Naive thymus-derived CD4-positive, alpha-beta T cell (primary cell): ENCODE measurements at regions of chrX and their contacts with region 1.

Region 1: GRCh38 chrX:43958529-43958928 is 14.7 kb downstream of the NDP start:
- DNase-seq: peak in 7 of 9 donors; percentile 18 to 58 (median 36)
- ATAC-seq: peak; percentile 74
- H3K4me3 ChIP-seq: no peak overlapping the region
- H3K4me3 Mint-ChIP-seq: peak overlapping the region in 1 of 10 donors; percentile 44
- H3K27ac ChIP-seq: no peak overlapping the region
- H3K27ac Mint-ChIP-seq: peak overlapping the region in 3 of 9 donors; percentile 6 to 29 (median 24)
- H3K4me1 ChIP-seq: no peaks in the 10 kb centered on the region
- H3K4me1 Mint-ChIP-seq: peaks cover 0 to 6% (median 5%) of the 10 kb centered on the region in 7 donors
- H3K27me3 ChIP-seq: no peaks in the 10 kb centered on the region
- H3K27me3 Mint-ChIP-seq: peaks cover 0 to 5% (median 0%) of the 10 kb centered on the region in 5 donors

Region 2: GRCh38 chrX:43836435-43837184 is 121.9 kb before region 1 on chrX:
- CTCF ChIA-PET with region 1: no interaction called
- POLR2A ChIA-PET with region 1: no interaction called
- intact Hi-C with region 1: loop called in 1 of 2 experiments (anchors 10 kb)
- DNase-seq: peak in 5 of 9 donors; percentile 8 to 39 (median 20)
- ATAC-seq: no peak
- H3K4me3 ChIP-seq: no peak overlapping the region
- H3K4me3 Mint-ChIP-seq: no peak overlapping the region
- H3K27ac ChIP-seq: no peak overlapping the region
- H3K27ac Mint-ChIP-seq: no peak overlapping the region
- H3K4me1 ChIP-seq: no peaks in the 10 kb centered on the region
- H3K4me1 Mint-ChIP-seq: no peaks in the 10 kb centered on the region
- H3K27me3 ChIP-seq: no peaks in the 10 kb centered on the region
- H3K27me3 Mint-ChIP-seq: peaks cover 0 to 6% (median 0%) of the 10 kb centered on the region in 5 donors

Region 3: GRCh38 chrX:44305921-44306735 is 347.6 kb after region 1 on chrX:
- CTCF ChIA-PET with region 1: interaction called, 5 read pairs
- POLR2A ChIA-PET with region 1: no interaction called
- intact Hi-C with region 1: loop called in 1 of 2 experiments (anchors 1 kb)
- DNase-seq: no peak
- ATAC-seq: no peak
- H3K4me3 ChIP-seq: no peak overlapping the region
- H3K4me3 Mint-ChIP-seq: no peak overlapping the region
- H3K27ac ChIP-seq: no peak overlapping the region
- H3K27ac Mint-ChIP-seq: peak overlapping the region in 1 of 9 donors; percentile 62
- H3K4me1 ChIP-seq: no peaks in the 10 kb centered on the region
- H3K4me1 Mint-ChIP-seq: peaks cover 0 to 5% (median 0%) of the 10 kb centered on the region in 7 donors
- H3K27me3 ChIP-seq: no peaks in the 10 kb centered on the region
- H3K27me3 Mint-ChIP-seq: no peaks in the 10 kb centered on the region

Region 4: DNA sequence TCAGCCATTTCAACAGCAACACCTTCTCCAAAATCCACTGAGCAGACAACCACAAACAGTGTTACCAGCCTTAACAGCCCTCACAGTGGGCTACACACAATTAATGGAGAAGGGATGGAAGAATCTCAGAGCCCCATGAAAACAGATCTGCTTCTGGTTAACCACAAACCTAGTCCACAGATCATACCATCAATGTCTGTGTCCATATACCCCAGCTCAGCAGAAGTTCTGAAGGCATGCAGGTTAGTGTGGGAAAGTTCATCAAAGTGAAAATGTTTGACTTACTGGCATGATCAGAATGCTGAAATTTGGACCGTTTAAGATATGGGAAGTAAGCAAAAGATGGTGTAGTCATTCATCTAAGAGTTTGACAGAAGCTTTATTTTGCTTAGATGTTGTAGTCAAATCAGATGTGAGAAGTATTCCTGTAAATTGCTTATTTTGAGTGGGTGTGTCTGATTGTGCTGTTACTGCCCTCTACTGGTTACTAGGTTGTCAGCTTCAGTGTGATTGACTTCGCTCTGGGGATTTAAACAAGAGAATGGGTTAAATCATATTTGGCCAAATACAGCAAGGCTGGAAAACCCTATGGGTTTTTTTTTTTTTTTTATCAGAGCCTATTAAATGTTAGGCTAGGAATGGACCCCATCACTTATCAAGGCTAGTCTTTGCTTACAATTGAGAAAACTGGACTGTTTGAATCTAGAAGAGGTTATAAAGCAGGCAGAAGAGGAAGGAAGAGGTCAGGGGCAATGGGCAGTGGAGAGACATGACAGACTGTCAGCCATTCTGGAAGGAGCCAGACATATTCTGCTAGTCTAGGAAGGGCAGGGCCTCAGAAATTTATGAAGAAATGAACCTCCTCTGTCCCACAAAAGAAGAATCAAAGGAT is 1111.8 kb after region 1 on chrX:
- CTCF ChIA-PET with region 1: no interaction called
- POLR2A ChIA-PET with region 1: no interaction called
- intact Hi-C with region 1: loop called (anchors 2 to 10 kb)
- DNase-seq: peak in 7 of 9 donors; percentile 9 to 59 (median 47)
- ATAC-seq: peak; percentile 74
- H3K4me3 ChIP-seq: no peak overlapping the region
- H3K4me3 Mint-ChIP-seq: peak overlapping the region in 7 of 10 donors; percentile 7 to 50 (median 17)
- H3K27ac ChIP-seq: peak overlapping the region; percentile 36
- H3K27ac Mint-ChIP-seq: peak overlapping the region; percentile 61 to 88 (median 74)
- H3K4me1 ChIP-seq: peaks cover 0 to 4% of the 10 kb centered on the region in 2 donors
- H3K4me1 Mint-ChIP-seq: peaks cover 30 to 87% (median 67%) of the 10 kb centered on the region in 7 donors
- H3K27me3 ChIP-seq: no peaks in the 10 kb centered on the region
- H3K27me3 Mint-ChIP-seq: no peaks in the 10 kb centered on the region

Region 5: GRCh38 chrX:45749375-45749774 is 1790.8 kb after region 1 on chrX:
- CTCF ChIA-PET with region 1: no interaction called
- POLR2A ChIA-PET with region 1: no interaction called
- intact Hi-C with region 1: loop called in 1 of 2 experiments (anchors 5 kb)
- DNase-seq: peak in 1 of 9 donors; percentile 33
- ATAC-seq: peak; percentile 59
- H3K4me3 ChIP-seq: no peak overlapping the region
- H3K4me3 Mint-ChIP-seq: peak overlapping the region in 1 of 10 donors; percentile 26
- H3K27ac ChIP-seq: no peak overlapping the region
- H3K27ac Mint-ChIP-seq: peak overlapping the region in 5 of 9 donors; percentile 19 to 48 (median 28)
- H3K4me1 ChIP-seq: peaks cover 17 to 32% of the 10 kb centered on the region in 2 donors
- H3K4me1 Mint-ChIP-seq: peaks cover 0 to 29% (median 8%) of the 10 kb centered on the region in 7 donors
- H3K27me3 ChIP-seq: no peaks in the 10 kb centered on the region
- H3K27me3 Mint-ChIP-seq: no peaks in the 10 kb centered on the region